RWPE1 (cell line): ENCODE measurements at regions of chr17 and their contacts with region 1.

Region 1: GRCh38 chr17:50707289-50708049 is at the start of gene ANKRD40:
- DNase-seq: peak; percentile 92
- H3K27ac ChIP-seq: peak within 1 kb of the TSS; percentile 98
- CTCF ChIP-seq: no peak

Region 2: DNA sequence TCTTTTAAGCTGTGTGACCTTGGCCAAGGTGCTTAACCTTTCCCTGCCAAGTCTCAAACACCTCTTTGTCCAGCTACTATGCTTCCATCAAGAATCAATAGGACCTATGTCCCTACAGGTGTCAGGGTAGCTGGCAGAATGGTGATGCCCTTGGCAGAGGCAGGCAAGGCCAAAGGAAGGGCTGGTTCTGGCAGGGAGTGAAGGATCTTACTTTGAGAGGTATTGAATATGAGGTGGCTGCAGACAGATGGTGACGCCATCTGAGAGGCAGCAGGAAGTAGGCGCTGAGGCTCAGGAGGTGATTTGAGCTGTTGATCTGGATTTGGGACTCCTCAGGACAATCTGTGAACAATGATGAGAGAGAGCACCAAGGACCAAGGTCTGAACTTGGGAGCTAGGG is 60.3 kb before region 1 on chr17:
- CTCF ChIA-PET with region 1: no interaction called
- POLR2A ChIA-PET with region 1: interaction called, 12 read pairs
- DNase-seq: no peak
- H3K27ac ChIP-seq: peak overlapping the region; percentile 39; the same call in 1 of the 2 replicates
- CTCF ChIP-seq: no peak

Region 3: GRCh38 chr17:50722746-50723145 is 15.3 kb after region 1 on chr17:
- CTCF ChIA-PET with region 1: no interaction called
- POLR2A ChIA-PET with region 1: interaction called, 13 read pairs
- DNase-seq: no peak
- H3K27ac ChIP-seq: no peak overlapping the region
- CTCF ChIP-seq: no peak